OCI-LY7 (cell line): ENCODE measurements at regions of chr2 and their contacts with region 1.

Region 1: GRCh38 chr2:86035883-86036668 is 69.6 kb downstream of the POLR1A start:
- DNase-seq: peak; percentile 94
- H3K4me3 ChIP-seq: peak overlapping the region; percentile 53
- H3K27ac ChIP-seq: peak overlapping the region; percentile 98
- H3K4me1 ChIP-seq: peaks cover 61% of the 10 kb centered on the region
- CTCF ChIP-seq: peak; percentile 67

Region 2: GRCh38 chr2:85826990-85827878 is 208.8 kb before region 1 on chr2:
- CTCF ChIA-PET with region 1: interaction called, 3 read pairs
- POLR2A ChIA-PET with region 1: no interaction called
- intact Hi-C with region 1: loop called (anchors 1 kb)
- DNase-seq: peak; percentile 76
- H3K4me3 ChIP-seq: no peak overlapping the region
- H3K27ac ChIP-seq: no peak overlapping the region
- H3K4me1 ChIP-seq: no peaks in the 10 kb centered on the region
- CTCF ChIP-seq: peak; percentile 86

Region 3: GRCh38 chr2:86079981-86080911 is 44.2 kb after region 1 on chr2:
- CTCF ChIA-PET with region 1: interaction called, 3 read pairs
- POLR2A ChIA-PET with region 1: interaction called, 3 read pairs
- intact Hi-C with region 1: loop called (anchors 2 kb)
- DNase-seq: peak; percentile 78
- H3K4me3 ChIP-seq: no peak overlapping the region
- H3K27ac ChIP-seq: no peak overlapping the region
- H3K4me1 ChIP-seq: peaks cover 8% of the 10 kb centered on the region
- CTCF ChIP-seq: peak; percentile 89

Region 4: DNA sequence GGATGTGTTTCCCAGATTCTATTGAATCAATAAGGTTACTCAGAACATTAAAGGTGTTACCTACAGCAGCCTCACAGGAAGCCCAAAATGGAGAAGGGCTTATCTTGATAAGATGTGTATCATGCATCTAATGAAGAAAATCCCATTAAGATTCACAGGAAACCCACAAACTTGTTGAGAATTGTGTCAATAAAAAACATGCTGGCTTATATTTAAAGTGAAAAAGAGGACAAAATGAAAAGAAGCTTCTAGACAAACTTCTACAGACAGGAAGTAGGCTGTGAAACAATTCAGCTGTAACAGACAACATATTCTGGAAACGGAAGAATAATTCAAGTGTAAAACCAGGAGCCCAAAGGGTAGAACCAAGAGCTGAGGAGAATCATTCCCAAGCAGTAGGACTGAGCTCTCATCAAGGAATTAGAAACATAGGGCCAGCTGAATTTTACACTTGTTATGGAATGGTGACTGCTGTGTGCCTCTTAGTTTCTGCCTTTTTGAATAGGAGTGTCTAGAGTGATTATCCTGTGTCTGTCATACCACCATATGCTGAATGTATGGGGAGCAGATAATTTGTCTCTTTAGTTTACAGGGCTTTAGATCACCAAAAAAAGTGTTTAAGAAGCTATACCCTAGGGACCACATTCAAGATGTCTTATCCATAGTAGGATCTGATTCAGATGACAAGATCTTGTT is 149.6 kb after region 1 on chr2:
- CTCF ChIA-PET with region 1: no interaction called
- POLR2A ChIA-PET with region 1: no interaction called
- intact Hi-C with region 1: loop called (anchors 5 kb)
- DNase-seq: peak; percentile 33
- H3K4me3 ChIP-seq: peak overlapping the region; percentile 13
- H3K27ac ChIP-seq: peak overlapping the region; percentile 65
- H3K4me1 ChIP-seq: peaks cover 37% of the 10 kb centered on the region
- CTCF ChIP-seq: no peak

Region 5: DNA sequence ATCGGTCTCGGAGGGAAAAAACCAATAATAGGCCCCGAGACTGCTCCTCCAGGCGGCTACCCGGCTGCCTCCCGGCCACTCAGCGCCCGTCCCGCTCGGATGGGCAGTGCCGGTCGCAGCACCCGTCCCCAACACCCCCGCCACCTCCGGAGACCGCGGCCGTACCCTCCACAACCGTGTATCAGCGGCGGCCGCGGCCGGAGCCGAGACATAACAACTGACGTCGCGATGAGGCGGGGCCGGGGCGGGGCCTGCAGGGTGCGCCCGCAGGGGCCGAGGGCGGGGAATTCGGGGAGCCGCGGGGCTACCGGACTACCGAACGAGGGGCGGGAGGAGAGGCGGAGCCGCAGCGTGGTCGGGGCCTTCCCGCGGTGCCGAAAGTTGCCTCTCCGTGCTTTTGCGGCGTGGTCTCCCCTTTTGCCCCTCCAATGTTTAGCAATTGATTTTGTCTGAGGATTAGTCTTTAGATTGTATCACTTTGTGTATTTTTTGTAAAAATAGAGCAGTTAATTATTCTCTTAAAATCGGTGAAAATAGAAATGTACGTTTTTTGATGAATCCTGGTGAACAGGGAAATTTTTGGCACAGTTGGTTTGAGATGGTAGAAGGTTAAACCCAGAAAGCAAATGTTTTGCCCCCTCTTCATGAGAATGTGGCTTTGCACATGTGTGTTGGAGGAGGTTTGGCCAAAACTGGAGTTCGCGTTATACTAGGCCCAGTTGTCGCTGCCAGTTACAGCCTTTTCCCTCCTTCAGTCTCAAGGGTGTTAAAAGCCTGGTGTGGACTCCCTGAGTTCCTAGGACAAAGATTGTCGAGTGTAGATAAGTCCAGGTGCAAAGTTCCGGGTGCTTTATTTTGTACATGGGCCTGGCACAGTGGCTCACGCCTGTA is 587.8 kb after region 1 on chr2 and contains the start of gene RNF103:
- CTCF ChIA-PET with region 1: no interaction called
- POLR2A ChIA-PET with region 1: no interaction called
- intact Hi-C with region 1: loop called (anchors 5 kb)
- DNase-seq: peak; percentile 93
- H3K4me3 ChIP-seq: peak within 1 kb of the TSS; percentile 94
- H3K27ac ChIP-seq: peak within 1 kb of the TSS; percentile 78
- H3K4me1 ChIP-seq: peaks cover 20% of the 10 kb centered on the region
- CTCF ChIP-seq: no peak
- total RNA-seq, gene RNF103: 11.8 and 12.9 TPM in 2 replicates